Activated CD4-positive, alpha-beta memory T cell treated with anti-CD3 and anti-CD28 coated beads for 36 hours (primary cell): ENCODE measurements at regions of chr4 and their contacts with region 1.

Region 1: GRCh38 chr4:127604949-127605709 is 27.6 kb upstream of the INTU start:
- DNase-seq: no peak
- H3K4me3 Mint-ChIP-seq: no peak overlapping the region
- H3K27ac Mint-ChIP-seq: no peak overlapping the region
- H3K4me1 Mint-ChIP-seq: no peaks in the 10 kb centered on the region
- H3K27me3 Mint-ChIP-seq: no peaks in the 10 kb centered on the region

Region 2: GRCh38 chr4:127616898-127617297 is 11.8 kb after region 1 on chr4:
- CTCF ChIA-PET with region 1: no interaction called
- POLR2A ChIA-PET with region 1: no interaction called
- intact Hi-C with region 1: no loop called
- DNase-seq: no peak
- H3K4me3 Mint-ChIP-seq: no peak overlapping the region
- H3K27ac Mint-ChIP-seq: no peak overlapping the region
- H3K4me1 Mint-ChIP-seq: no peaks in the 10 kb centered on the region
- H3K27me3 Mint-ChIP-seq: peaks cover 17% of the 10 kb centered on the region

Region 3: GRCh38 chr4:127732613-127733328 is 127.6 kb after region 1 on chr4:
- CTCF ChIA-PET with region 1: interaction called, 6 read pairs
- POLR2A ChIA-PET with region 1: interaction called, 3 read pairs
- intact Hi-C with region 1: loop called (anchors 1 kb)
- DNase-seq: no peak
- H3K4me3 Mint-ChIP-seq: no peak overlapping the region
- H3K27ac Mint-ChIP-seq: no peak overlapping the region
- H3K4me1 Mint-ChIP-seq: no peaks in the 10 kb centered on the region
- H3K27me3 Mint-ChIP-seq: no peaks in the 10 kb centered on the region

Region 4: GRCh38 chr4:127788517-127788916 is 183.4 kb after region 1 on chr4:
- CTCF ChIA-PET with region 1: no interaction called
- POLR2A ChIA-PET with region 1: no interaction called
- intact Hi-C with region 1: loop called (anchors 2 kb)
- DNase-seq: no peak
- H3K4me3 Mint-ChIP-seq: no peak overlapping the region
- H3K27ac Mint-ChIP-seq: no peak overlapping the region
- H3K4me1 Mint-ChIP-seq: no peaks in the 10 kb centered on the region
- H3K27me3 Mint-ChIP-seq: peaks cover 31% of the 10 kb centered on the region